ENCODE measurements at regions of chr6 and their contacts with region 1.

Region 1: GRCh38 chr6:32609731-32610640 is 20.3 kb upstream of the HLA-DRB1 start:
- DNase-seq: peak; percentile 100
- ATAC-seq: peak; percentile 84
- H3K4me3 ChIP-seq: peak overlapping the region; percentile 3; the same call in 1 of the 2 replicates
- H3K27ac ChIP-seq: peak overlapping the region; percentile 95
- H3K4me1 ChIP-seq: peaks cover 17% of the 10 kb centered on the region
- H3K27me3 ChIP-seq: no peaks in the 10 kb centered on the region
- CTCF ChIP-seq: no peak
- EP300 ChIP-seq: peak; percentile 30 to 68; a peak in 2 of 4 replicates
- POLR2A ChIP-seq: peak; percentile 59; the same call in 1 of the 2 replicates
- RAD21 ChIP-seq: no peak

Region 2: DNA sequence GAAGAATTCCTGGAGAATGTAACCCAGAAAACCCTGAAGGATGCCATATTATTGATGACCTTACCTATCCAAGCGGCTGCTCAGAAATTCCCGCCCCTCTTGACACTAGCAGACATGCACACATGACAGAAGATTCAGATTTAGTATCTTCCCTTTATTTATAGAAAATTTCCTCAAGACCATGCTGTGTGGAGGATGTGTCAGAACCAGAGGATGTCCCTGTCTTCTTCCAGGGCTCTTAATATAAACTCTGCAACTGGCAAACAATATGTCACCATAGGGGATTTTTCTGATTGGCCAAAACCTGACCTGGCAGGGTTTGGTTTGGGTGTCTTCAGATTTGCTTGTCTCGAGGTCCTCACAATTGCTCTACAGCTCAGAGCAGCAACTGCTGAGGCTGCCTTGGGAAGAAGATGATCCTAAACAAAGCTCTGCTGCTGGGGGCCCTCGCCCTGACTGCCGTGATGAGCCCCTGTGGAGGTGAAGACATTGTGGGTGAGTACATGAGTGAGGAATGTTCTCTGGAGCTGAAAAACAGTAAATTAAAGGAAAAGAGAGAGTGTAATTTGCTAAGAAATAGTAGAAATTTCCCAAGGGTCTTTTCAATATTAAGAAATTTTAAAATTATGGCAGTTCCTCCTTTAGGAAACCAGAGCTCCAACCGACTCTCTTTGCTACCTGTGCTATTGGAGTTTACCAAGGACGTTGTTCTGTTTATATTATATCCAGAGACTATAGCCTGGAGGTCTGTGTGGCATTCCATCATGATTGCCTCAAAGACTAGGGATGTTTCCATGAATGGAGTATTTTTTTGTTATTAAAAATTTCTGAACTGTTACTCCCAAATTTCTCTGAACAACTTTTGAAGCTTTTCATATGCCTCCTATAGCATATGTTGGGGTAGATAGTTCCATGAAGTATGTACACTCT is 131.3 kb after region 1 on chr6 and contains the start of gene HLA-DQA2:
- CTCF ChIA-PET with region 1: no interaction called
- POLR2A ChIA-PET with region 1: no interaction called
- RAD21 ChIA-PET with region 1: no interaction called
- SMC1A ChIA-PET with region 1: no interaction called
- in situ Hi-C with region 1: no loop called
- intact Hi-C with region 1: no loop called
- DNase-seq: no peak
- ATAC-seq: peak; percentile 72
- H3K4me3 ChIP-seq: no peak within 1 kb of the TSS
- H3K27ac ChIP-seq: no peak within 1 kb of the TSS
- H3K4me1 ChIP-seq: no peaks in the 10 kb centered on the region; the same call in 1 of the 2 replicates
- H3K27me3 ChIP-seq: peaks cover 0 to 4% of the 10 kb centered on the region in 2 experiments; a peak in 2 of 4 replicates
- CTCF ChIP-seq: no peak
- EP300 ChIP-seq: no peak
- POLR2A ChIP-seq: no peak
- RAD21 ChIP-seq: no peak
- polyA plus RNA-seq, gene HLA-DQA2: 17.2 to 21.8 TPM

Region 3: GRCh38 chr6:32853541-32854375 is 243.8 kb after region 1 on chr6 and contains the starts of genes PSMB9 and TAP1:
- CTCF ChIA-PET with region 1: no interaction called
- POLR2A ChIA-PET with region 1: no interaction called
- RAD21 ChIA-PET with region 1: no interaction called
- SMC1A ChIA-PET with region 1: no interaction called
- in situ Hi-C with region 1: no loop called
- intact Hi-C with region 1: loop called (anchors 10 kb)
- DNase-seq: peak; percentile 89
- ATAC-seq: peak; percentile 88
- H3K4me3 ChIP-seq: peak within 1 kb of the TSS; percentile 88
- H3K27ac ChIP-seq: peak within 1 kb of the TSS; percentile 100
- H3K4me1 ChIP-seq: peaks cover 32% of the 10 kb centered on the region
- H3K27me3 ChIP-seq: no peaks in the 10 kb centered on the region
- CTCF ChIP-seq: peak; percentile 79 to 84 (median 83)
- EP300 ChIP-seq: no peak
- POLR2A ChIP-seq: peak; percentile 83
- RAD21 ChIP-seq: peak; percentile 78
- polyA plus RNA-seq, gene PSMB9: 202 to 299 TPM
- polyA plus RNA-seq, gene TAP1: 33.4 to 60.0 TPM